ENCODE measurements at regions of chr1 and their contacts with region 1.

Region 1: DNA sequence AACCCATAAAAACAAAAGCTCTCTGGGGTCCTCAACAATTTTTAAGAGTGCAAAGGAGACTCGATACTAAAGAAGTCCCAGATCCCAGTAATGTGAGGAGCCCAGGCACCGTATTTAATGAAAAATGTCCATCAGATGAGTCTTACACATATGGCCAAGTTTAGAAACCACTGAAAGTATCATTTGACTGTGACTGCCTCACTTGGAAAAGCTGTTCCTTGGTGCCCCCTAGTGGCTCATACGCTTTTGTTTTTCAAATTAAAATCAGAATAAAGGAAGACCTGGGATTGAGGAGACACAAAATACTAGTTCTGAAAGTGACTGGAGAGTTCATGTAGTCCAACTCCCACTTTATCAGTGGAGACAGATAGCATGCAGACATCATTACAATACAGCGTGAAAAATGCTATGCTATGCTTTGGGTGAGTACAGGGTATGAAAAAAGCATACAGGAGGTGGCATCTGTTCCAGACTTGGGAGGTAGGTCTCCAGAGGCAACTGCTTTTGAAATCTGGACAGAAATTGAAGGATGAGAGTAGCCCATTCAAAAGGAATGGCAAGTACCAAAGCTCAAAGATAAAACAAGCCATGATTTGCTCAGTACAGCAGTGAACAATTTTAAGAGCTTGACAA is 33.8 kb downstream of the GDAP2 start:
- DNase-seq: peak; percentile 74
- H3K4me3 Mint-ChIP-seq: no peak overlapping the region
- H3K27ac Mint-ChIP-seq: no peak overlapping the region
- H3K4me1 Mint-ChIP-seq: no peaks in the 10 kb centered on the region
- H3K27me3 Mint-ChIP-seq: no peaks in the 10 kb centered on the region

Region 2: GRCh38 chr1:117512743-117513321 is 382.8 kb before region 1 on chr1:
- CTCF ChIA-PET with region 1: interaction called, 18 read pairs
- DNase-seq: no peak
- H3K4me3 Mint-ChIP-seq: no peak overlapping the region
- H3K27ac Mint-ChIP-seq: no peak overlapping the region
- H3K4me1 Mint-ChIP-seq: no peaks in the 10 kb centered on the region
- H3K27me3 Mint-ChIP-seq: no peaks in the 10 kb centered on the region

Region 3: DNA sequence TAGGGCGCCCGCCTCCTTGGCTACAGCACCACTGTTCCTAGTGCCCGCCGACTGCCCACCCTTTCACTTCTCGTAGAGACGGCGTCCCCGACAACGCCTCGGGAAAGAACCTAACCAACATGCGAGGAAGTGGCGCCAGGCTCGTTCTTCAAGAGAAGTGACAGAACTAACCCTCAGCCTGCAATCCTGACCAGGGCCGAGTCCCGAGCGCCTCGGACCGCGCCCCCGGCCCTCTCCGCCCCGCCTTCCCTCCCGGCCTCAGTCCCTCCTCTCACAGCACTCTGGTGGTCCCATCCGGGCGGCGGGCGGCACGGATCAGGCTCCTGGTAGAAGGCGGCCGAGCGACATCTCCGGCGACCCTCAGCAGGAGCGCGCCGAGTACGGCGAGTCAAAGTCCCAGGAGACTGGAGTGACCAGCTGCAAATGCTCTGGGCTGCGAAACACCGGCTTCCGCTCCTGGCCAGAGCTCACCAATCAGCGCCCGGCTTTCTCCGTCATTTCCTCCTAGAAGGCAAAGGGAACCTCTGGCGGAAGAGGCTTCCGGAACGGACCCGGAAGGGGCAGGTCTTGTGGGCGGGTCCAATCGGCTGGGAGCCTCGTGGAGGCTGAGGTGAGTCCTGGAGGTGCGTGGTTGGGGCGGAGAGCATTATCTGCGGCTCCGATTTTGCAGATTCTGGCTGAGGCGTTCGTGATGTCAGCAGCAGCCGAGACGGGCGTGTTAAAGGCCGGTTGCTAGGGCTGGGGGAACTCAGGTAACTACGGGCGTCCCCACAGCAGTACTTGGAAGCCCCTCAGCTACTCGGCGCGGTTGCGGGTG is 33.8 kb after region 1 on chr1 and contains the starts of genes GDAP2 and WDR3:
- CTCF ChIA-PET with region 1: interaction called, 15 read pairs
- DNase-seq: peak; percentile 98
- H3K4me3 Mint-ChIP-seq: peak within 1 kb of the TSS; percentile 90
- H3K27ac Mint-ChIP-seq: peak within 1 kb of the TSS; percentile 90
- H3K4me1 Mint-ChIP-seq: peaks cover 42% of the 10 kb centered on the region
- H3K27me3 Mint-ChIP-seq: peaks cover 9% of the 10 kb centered on the region

Measured in activated naive CD4-positive, alpha-beta T cell treated with anti-CD3 and anti-CD28 coated beads, Interleukin-2, amount 10 ng/mL, durations not matched to agents 7 days and 5 days (primary cell).